T-cell (primary cell): ENCODE measurements at regions of chr1 and their contacts with region 1.

Region 1: GRCh38 chr1:155017041-155017945 is 14.7 kb downstream of the ZBTB7B start:
- DNase-seq: peak; percentile 72 to 95 (median 84)
- ATAC-seq: peak; percentile 84 to 93 (median 89)
- H3K4me3 ChIP-seq: peak overlapping the region; percentile 33 to 38
- H3K4me3 Mint-ChIP-seq: peak overlapping the region; percentile 55 to 89 (median 55)
- H3K27ac ChIP-seq: peak overlapping the region; percentile 67
- H3K27ac Mint-ChIP-seq: peak overlapping the region; percentile 95 to 96
- H3K4me1 ChIP-seq: peaks cover 42 to 59% of the 10 kb centered on the region in 2 experiments
- H3K4me1 Mint-ChIP-seq: peaks cover 63 to 72% (median 69%) of the 10 kb centered on the region in 3 donors
- H3K27me3 ChIP-seq: no peaks in the 10 kb centered on the region
- H3K27me3 Mint-ChIP-seq: no peaks in the 10 kb centered on the region

Region 2: GRCh38 chr1:154955718-154956543 is 61.4 kb before region 1 on chr1 and contains the start of gene PBXIP1:
- CTCF ChIA-PET with region 1: interaction called, 8 to 13 read pairs
- POLR2A ChIA-PET with region 1: interaction called, 3 to 5 read pairs
- DNase-seq: peak; percentile 57 to 95 (median 83)
- ATAC-seq: peak; percentile 48 to 63 (median 56)
- H3K4me3 ChIP-seq: peak within 1 kb of the TSS; percentile 79 to 94
- H3K4me3 Mint-ChIP-seq: peak within 1 kb of the TSS; percentile 95 to 100 (median 97)
- H3K27ac ChIP-seq: peak within 1 kb of the TSS; percentile 99
- H3K27ac Mint-ChIP-seq: peak within 1 kb of the TSS; percentile 100
- H3K4me1 ChIP-seq: peaks cover 44 to 83% of the 10 kb centered on the region in 2 experiments
- H3K4me1 Mint-ChIP-seq: peaks cover 72 to 79% (median 77%) of the 10 kb centered on the region in 3 donors
- H3K27me3 ChIP-seq: no peaks in the 10 kb centered on the region
- H3K27me3 Mint-ChIP-seq: no peaks in the 10 kb centered on the region
- total RNA-seq, gene PBXIP1: 299 to 450 (median 328) TPM

Region 3: DNA sequence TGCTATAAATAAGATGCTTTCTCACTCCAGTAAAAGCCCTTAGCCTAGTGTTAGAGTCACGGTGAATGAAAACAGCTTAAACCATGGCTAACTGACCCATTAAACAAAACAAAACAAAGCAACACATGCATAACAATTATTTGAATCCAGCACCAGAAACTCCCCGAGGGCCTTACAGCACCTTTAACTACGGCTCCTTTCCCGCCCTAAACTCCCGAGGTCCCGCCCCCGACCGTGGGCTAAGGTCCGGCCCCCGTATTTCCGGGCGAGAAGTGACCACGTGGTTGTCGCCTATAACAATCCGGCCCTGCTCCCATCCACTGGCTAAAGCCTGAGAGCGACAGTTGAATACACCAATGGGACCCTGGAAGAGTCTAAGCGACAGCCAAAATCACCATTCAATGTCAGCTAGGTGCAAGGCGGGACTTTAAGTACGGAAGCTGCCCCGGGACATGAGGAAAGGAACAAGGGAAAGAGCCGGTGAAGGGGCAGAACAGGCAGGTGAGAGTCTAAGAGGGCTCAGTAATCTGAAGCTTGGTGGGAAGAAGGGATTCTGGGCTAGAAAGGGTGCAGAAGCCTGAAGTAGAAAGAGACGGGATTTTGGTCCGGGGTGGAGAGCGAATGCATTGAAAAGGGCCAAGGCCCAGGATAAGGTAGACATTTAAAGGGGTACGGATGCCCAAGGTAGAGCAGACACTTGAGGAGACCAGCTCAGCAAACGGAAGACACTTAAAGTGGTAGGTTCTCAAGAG is 34.2 kb before region 1 on chr1 and contains the start of gene FLAD1:
- CTCF ChIA-PET with region 1: interaction called, 14 to 23 read pairs
- POLR2A ChIA-PET with region 1: interaction called, 3 to 7 read pairs
- DNase-seq: peak; percentile 85 to 98 (median 95)
- ATAC-seq: peak; percentile 99 to 100 (median 100)
- H3K4me3 ChIP-seq: peak within 1 kb of the TSS; percentile 67 to 84
- H3K4me3 Mint-ChIP-seq: no peak within 1 kb of the TSS
- H3K27ac ChIP-seq: peak within 1 kb of the TSS; percentile 54
- H3K27ac Mint-ChIP-seq: no peak within 1 kb of the TSS
- H3K4me1 ChIP-seq: peaks cover 14 to 28% of the 10 kb centered on the region in 2 experiments
- H3K4me1 Mint-ChIP-seq: peaks cover 0 to 17% (median 13%) of the 10 kb centered on the region in 3 donors
- H3K27me3 ChIP-seq: no peaks in the 10 kb centered on the region
- H3K27me3 Mint-ChIP-seq: no peaks in the 10 kb centered on the region
- total RNA-seq, gene FLAD1: 32.8 to 64.3 (median 53.4) TPM

Region 4: DNA sequence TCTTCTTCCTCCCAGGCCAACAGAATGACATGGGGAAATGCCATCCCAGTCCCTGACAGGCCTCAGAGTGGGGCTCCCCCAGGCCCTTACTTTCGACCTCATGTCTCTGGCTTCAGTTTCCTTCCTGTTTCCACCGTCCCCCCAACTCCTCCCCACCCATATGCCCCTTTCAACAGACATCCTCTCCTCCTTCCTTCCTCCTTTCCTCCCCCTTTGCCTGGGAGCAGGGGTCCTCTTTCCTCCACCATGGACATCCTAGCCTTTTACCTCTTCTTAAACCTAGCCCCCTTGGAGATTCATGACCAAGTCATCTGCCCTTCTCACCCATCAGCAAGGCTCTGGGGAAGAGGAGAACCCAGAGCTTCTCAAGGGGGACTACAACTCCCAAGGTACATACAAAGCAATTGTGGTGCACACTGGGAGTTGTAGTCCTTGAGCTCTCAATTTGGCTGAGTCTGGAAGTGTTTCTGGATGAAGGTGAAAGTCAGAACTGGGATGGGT is 10.6 kb before region 1 on chr1:
- CTCF ChIA-PET with region 1: interaction called, 6 to 10 read pairs
- POLR2A ChIA-PET with region 1: interaction called in 1 of 2 experiments, 13 read pairs
- DNase-seq: peak in 6 of 35 experiments; percentile 40 to 72 (median 46)
- ATAC-seq: peak; percentile 18 to 53 (median 24)
- H3K4me3 ChIP-seq: no peak overlapping the region
- H3K4me3 Mint-ChIP-seq: peak overlapping the region; percentile 17 to 89 (median 35)
- H3K27ac ChIP-seq: peak overlapping the region; percentile 78
- H3K27ac Mint-ChIP-seq: peak overlapping the region; percentile 94 to 97
- H3K4me1 ChIP-seq: peaks cover 29 to 91% of the 10 kb centered on the region in 2 experiments
- H3K4me1 Mint-ChIP-seq: peaks cover 64 to 73% (median 68%) of the 10 kb centered on the region in 3 donors
- H3K27me3 ChIP-seq: no peaks in the 10 kb centered on the region
- H3K27me3 Mint-ChIP-seq: no peaks in the 10 kb centered on the region

Region 5: GRCh38 chr1:155063550-155064110 is 46.3 kb after region 1 on chr1 and contains the start of gene EFNA4:
- CTCF ChIA-PET with region 1: no interaction called
- POLR2A ChIA-PET with region 1: no interaction called
- DNase-seq: peak; percentile 63 to 90 (median 81)
- ATAC-seq: peak; percentile 88 to 89 (median 89)
- H3K4me3 ChIP-seq: peak within 1 kb of the TSS; percentile 86 to 89
- H3K4me3 Mint-ChIP-seq: peak within 1 kb of the TSS; percentile 84 to 88 (median 86)
- H3K27ac ChIP-seq: peak within 1 kb of the TSS; percentile 47
- H3K27ac Mint-ChIP-seq: peak within 1 kb of the TSS; percentile 68 to 83
- H3K4me1 ChIP-seq: peaks cover 14 to 31% of the 10 kb centered on the region in 2 experiments
- H3K4me1 Mint-ChIP-seq: peaks cover 26 to 43% (median 41%) of the 10 kb centered on the region in 3 donors
- H3K27me3 ChIP-seq: no peaks in the 10 kb centered on the region
- H3K27me3 Mint-ChIP-seq: no peaks in the 10 kb centered on the region
- total RNA-seq, gene EFNA4: 3.1 to 7.8 (median 6.6) TPM

Region 6: GRCh38 chr1:155145491-155145890 is 128.2 kb after region 1 on chr1:
- CTCF ChIA-PET with region 1: no interaction called
- POLR2A ChIA-PET with region 1: no interaction called
- DNase-seq: no peak
- ATAC-seq: no peak
- H3K4me3 ChIP-seq: no peak overlapping the region
- H3K4me3 Mint-ChIP-seq: no peak overlapping the region
- H3K27ac ChIP-seq: no peak overlapping the region
- H3K27ac Mint-ChIP-seq: no peak overlapping the region
- H3K4me1 ChIP-seq: peaks cover 0 to 3% of the 10 kb centered on the region in 2 experiments
- H3K4me1 Mint-ChIP-seq: peaks cover 2 to 11% (median 3%) of the 10 kb centered on the region in 3 donors
- H3K27me3 ChIP-seq: peaks cover 0 to 24% of the 10 kb centered on the region in 2 experiments
- H3K27me3 Mint-ChIP-seq: peaks cover 19 to 28% of the 10 kb centered on the region in 2 donors